CD8-positive, alpha-beta T cell (primary cell): ENCODE measurements at regions of chr22 and their contacts with region 1.

Region 1: DNA sequence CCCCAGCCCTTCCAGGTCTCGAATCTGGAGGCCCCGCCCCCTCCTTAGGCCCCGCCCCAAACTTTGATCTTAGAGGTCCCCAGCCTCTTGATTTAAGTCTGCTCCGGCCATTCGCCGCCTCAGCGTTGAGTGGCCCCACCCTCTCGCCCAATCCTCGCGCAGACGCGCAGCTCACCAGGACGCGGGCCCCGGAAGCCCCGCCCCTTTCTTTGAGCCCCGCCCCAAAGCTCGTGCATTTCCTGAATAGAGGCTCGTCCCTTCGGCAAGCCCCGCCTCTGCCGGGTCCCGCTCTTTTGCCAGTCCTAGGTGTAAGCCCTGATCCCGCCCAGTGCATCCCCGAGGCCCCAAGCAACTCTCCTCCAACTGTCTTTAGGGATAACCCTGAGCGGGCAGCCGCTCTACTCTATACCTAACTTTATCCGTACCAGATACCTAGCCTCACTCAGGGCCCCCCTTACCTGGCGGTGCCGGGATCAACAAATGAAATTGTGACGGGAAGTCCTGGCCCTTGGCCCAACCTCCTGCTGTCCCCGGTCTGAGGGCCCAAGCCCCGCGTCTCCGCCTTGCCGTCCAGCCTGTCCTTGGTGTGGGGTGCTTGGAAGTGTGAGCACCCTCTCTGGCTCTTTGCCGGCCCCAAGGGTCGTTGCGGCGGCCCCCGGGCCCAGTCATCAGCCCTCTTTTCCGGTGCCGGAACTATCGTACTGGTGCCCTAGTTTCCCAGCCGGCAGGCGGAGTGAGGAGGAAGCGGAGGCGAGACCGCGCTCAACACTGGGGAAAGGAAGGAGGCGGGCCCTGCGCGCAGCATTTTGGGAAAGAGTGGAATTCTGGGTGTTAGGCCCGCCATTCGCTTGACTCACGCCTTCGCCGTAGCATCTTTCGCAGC is at the start of gene SNRPD3:
- DNase-seq: peak; percentile 99 to 100 (median 100)
- ATAC-seq: peak; percentile 86
- H3K4me3 ChIP-seq: peak within 1 kb of the TSS; percentile 70 to 96
- H3K4me3 Mint-ChIP-seq: peak within 1 kb of the TSS; percentile 93
- H3K27ac ChIP-seq: peak within 1 kb of the TSS; percentile 73 to 99
- H3K27ac Mint-ChIP-seq: peak within 1 kb of the TSS; percentile 98
- H3K4me1 ChIP-seq: peaks cover 35% of the 10 kb centered on the region
- H3K4me1 Mint-ChIP-seq: peaks cover 68% of the 10 kb centered on the region
- H3K27me3 ChIP-seq: no peaks in the 10 kb centered on the region
- H3K27me3 Mint-ChIP-seq: no peaks in the 10 kb centered on the region
- CTCF ChIP-seq: no peak
- total RNA-seq, gene SNRPD3: 33.1 to 35.0 TPM

Region 2: DNA sequence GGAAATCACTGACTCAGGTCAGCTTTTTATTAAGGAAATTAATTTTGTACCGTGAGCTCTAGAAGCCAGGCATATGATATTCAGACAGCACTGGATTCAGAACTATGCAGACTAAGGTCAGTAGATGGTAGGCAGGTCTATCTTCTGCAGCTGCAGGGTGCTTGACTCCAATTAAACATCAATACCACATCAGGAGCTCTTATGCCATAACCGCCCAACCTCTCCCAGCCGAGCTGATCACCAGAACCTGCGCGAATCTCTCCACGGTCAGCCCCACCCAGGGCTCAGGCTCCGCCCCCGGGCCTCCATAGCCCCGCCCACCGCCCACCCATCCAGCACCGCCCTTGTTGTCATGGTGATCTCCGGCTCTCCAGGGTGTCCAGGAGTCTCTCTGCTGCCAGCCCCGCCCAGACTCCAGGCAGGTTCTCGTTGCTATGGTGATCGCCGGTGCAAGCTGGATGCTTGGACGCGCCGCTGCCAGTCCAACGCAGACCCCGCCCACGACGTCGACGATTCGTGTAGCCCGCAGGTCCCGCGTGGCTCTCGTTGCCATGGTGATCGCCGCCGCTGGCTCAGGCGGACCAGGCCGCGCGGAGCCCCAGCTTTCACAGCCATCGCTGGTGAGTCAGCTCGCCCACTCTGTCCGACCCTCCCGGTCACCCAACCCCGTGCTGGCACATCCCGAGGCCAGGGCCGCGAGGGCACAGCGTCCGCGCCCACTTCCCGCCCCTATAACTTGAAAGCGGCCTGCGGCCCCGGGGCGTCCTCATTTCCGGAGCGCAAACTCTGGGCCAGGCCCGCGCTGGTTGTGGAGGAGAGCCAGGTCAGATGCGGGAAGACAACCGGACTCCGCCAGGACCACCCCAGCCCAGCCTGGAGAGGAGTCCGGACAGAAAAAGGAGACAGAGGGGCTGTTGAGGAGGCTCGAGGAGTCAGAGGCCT is 1410.2 kb before region 1 on chr22 and contains the start of gene RAB36:
- CTCF ChIA-PET with region 1: no interaction called
- POLR2A ChIA-PET with region 1: no interaction called
- intact Hi-C with region 1: loop called (anchors 5 to 10 kb)
- DNase-seq: peak; percentile 73 to 97 (median 89)
- ATAC-seq: peak; percentile 50
- H3K4me3 ChIP-seq: peak within 1 kb of the TSS; percentile 35 to 40
- H3K4me3 Mint-ChIP-seq: peak within 1 kb of the TSS; percentile 78
- H3K27ac ChIP-seq: peak within 1 kb of the TSS; percentile 71 to 87
- H3K27ac Mint-ChIP-seq: peak within 1 kb of the TSS; percentile 86
- H3K4me1 ChIP-seq: peaks cover 55% of the 10 kb centered on the region
- H3K4me1 Mint-ChIP-seq: peaks cover 46% of the 10 kb centered on the region
- H3K27me3 ChIP-seq: no peaks in the 10 kb centered on the region
- H3K27me3 Mint-ChIP-seq: no peaks in the 10 kb centered on the region
- CTCF ChIP-seq: no peak
- total RNA-seq, gene RAB36: 0.52 to 0.64 TPM

Region 3: GRCh38 chr22:24011735-24012068 is 543.7 kb before region 1 on chr22:
- CTCF ChIA-PET with region 1: no interaction called
- POLR2A ChIA-PET with region 1: interaction called, 3 read pairs
- intact Hi-C with region 1: loop called in 1 of 2 experiments (anchors 1 kb)
- DNase-seq: no peak
- ATAC-seq: no peak
- H3K4me3 ChIP-seq: peak overlapping the region; percentile 71 to 87
- H3K4me3 Mint-ChIP-seq: peak overlapping the region; percentile 97
- H3K27ac ChIP-seq: peak overlapping the region; percentile 69 to 77
- H3K27ac Mint-ChIP-seq: peak overlapping the region; percentile 94
- H3K4me1 ChIP-seq: peaks cover 10% of the 10 kb centered on the region
- H3K4me1 Mint-ChIP-seq: peaks cover 40% of the 10 kb centered on the region
- H3K27me3 ChIP-seq: no peaks in the 10 kb centered on the region
- H3K27me3 Mint-ChIP-seq: no peaks in the 10 kb centered on the region
- CTCF ChIP-seq: no peak

Region 4: GRCh38 chr22:24423519-24424000 is 131.8 kb before region 1 on chr22:
- CTCF ChIA-PET with region 1: no interaction called
- POLR2A ChIA-PET with region 1: interaction called, 3 read pairs
- intact Hi-C with region 1: loop called (anchors 1 kb)
- DNase-seq: peak; percentile 33 to 82 (median 60)
- ATAC-seq: no peak
- H3K4me3 ChIP-seq: peak overlapping the region in 1 of 2 experiments; percentile 47
- H3K4me3 Mint-ChIP-seq: peak overlapping the region; percentile 72
- H3K27ac ChIP-seq: no peak overlapping the region
- H3K27ac Mint-ChIP-seq: no peak overlapping the region
- H3K4me1 ChIP-seq: peaks cover 32% of the 10 kb centered on the region
- H3K4me1 Mint-ChIP-seq: peaks cover 39% of the 10 kb centered on the region
- H3K27me3 ChIP-seq: no peaks in the 10 kb centered on the region
- H3K27me3 Mint-ChIP-seq: no peaks in the 10 kb centered on the region
- CTCF ChIP-seq: peak; percentile 89

Region 5: GRCh38 chr22:24592851-24593558 is 37.6 kb after region 1 on chr22 and contains the start of gene LRRC75B:
- CTCF ChIA-PET with region 1: no interaction called
- POLR2A ChIA-PET with region 1: no interaction called
- intact Hi-C with region 1: no loop called
- DNase-seq: peak in 3 of 9 experiments; percentile 16 to 32 (median 19)
- ATAC-seq: peak; percentile 36
- H3K4me3 ChIP-seq: peak within 1 kb of the TSS; percentile 11 to 31
- H3K4me3 Mint-ChIP-seq: peak within 1 kb of the TSS; percentile 81
- H3K27ac ChIP-seq: no peak within 1 kb of the TSS
- H3K27ac Mint-ChIP-seq: no peak within 1 kb of the TSS
- H3K4me1 ChIP-seq: no peaks in the 10 kb centered on the region
- H3K4me1 Mint-ChIP-seq: peaks cover 4% of the 10 kb centered on the region
- H3K27me3 ChIP-seq: peaks cover 0 to 3% of the 10 kb centered on the region in 2 experiments
- H3K27me3 Mint-ChIP-seq: peaks cover 8% of the 10 kb centered on the region
- CTCF ChIP-seq: no peak
- total RNA-seq, gene LRRC75B: not detected

Region 6: GRCh38 chr22:24805790-24806662 is 250.6 kb after region 1 on chr22 and contains the start of gene SGSM1:
- CTCF ChIA-PET with region 1: no interaction called
- POLR2A ChIA-PET with region 1: no interaction called
- intact Hi-C with region 1: loop called in 1 of 2 experiments (anchors 5 kb)
- DNase-seq: peak; percentile 48 to 89 (median 71)
- ATAC-seq: peak; percentile 91
- H3K4me3 ChIP-seq: peak within 1 kb of the TSS; percentile 70
- H3K4me3 Mint-ChIP-seq: peak within 1 kb of the TSS; percentile 75
- H3K27ac ChIP-seq: peak within 1 kb of the TSS; percentile 30 to 46
- H3K27ac Mint-ChIP-seq: peak within 1 kb of the TSS; percentile 2
- H3K4me1 ChIP-seq: peaks cover 4% of the 10 kb centered on the region
- H3K4me1 Mint-ChIP-seq: peaks cover 9% of the 10 kb centered on the region
- H3K27me3 ChIP-seq: no peaks in the 10 kb centered on the region
- H3K27me3 Mint-ChIP-seq: no peaks in the 10 kb centered on the region
- CTCF ChIP-seq: no peak
- total RNA-seq, gene SGSM1: 0.84 to 1.7 TPM